GM10248 (cell line): ENCODE measurements at regions of chr11 and their contacts with region 1.

Region 1: GRCh38 chr11:6353367-6353987 is 33.2 kb upstream of the CAVIN3 start:
- DNase-seq: peak; percentile 67
- CTCF ChIP-seq: peak; percentile 95

Region 2: GRCh38 chr11:6321961-6322362 is 31.5 kb before region 1 on chr11:
- CTCF ChIA-PET with region 1: interaction called, 38 read pairs
- POLR2A ChIA-PET with region 1: no interaction called
- DNase-seq: no peak
- CTCF ChIP-seq: no peak

Region 3: GRCh38 chr11:6333112-6333511 is 20.4 kb before region 1 on chr11:
- CTCF ChIA-PET with region 1: interaction called, 84 read pairs
- POLR2A ChIA-PET with region 1: no interaction called
- DNase-seq: no peak
- CTCF ChIP-seq: no peak

Region 4: DNA sequence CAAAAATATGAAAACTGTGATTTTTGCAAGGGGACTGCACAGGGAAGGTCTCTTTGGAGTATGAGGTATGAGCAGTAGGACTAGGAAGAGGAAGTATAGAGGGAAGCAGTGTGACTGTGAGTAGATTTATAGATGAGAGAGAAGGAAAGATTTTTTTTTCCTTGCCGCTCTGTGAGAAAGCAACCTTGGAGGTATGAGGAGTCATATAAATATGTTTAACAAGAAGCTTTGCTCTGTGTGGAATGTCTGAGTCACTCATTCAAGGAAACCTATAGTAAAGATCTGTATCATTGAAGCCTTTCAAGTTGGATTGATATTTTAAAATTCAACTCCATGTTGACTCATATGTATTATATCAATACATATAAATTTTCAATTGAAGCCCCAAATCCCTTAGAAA is 169.8 kb after region 1 on chr11:
- CTCF ChIA-PET with region 1: no interaction called
- POLR2A ChIA-PET with region 1: no interaction called
- DNase-seq: no peak
- CTCF ChIP-seq: no peak

Region 5: GRCh38 chr11:6544921-6545850 is 191.7 kb after region 1 on chr11:
- CTCF ChIA-PET with region 1: no interaction called
- POLR2A ChIA-PET with region 1: no interaction called
- DNase-seq: no peak
- CTCF ChIP-seq: no peak